Esophagus squamous epithelium (tissue), 5 donors: ENCODE measurements at regions of chr6 and their contacts with region 1.

Region 1: DNA sequence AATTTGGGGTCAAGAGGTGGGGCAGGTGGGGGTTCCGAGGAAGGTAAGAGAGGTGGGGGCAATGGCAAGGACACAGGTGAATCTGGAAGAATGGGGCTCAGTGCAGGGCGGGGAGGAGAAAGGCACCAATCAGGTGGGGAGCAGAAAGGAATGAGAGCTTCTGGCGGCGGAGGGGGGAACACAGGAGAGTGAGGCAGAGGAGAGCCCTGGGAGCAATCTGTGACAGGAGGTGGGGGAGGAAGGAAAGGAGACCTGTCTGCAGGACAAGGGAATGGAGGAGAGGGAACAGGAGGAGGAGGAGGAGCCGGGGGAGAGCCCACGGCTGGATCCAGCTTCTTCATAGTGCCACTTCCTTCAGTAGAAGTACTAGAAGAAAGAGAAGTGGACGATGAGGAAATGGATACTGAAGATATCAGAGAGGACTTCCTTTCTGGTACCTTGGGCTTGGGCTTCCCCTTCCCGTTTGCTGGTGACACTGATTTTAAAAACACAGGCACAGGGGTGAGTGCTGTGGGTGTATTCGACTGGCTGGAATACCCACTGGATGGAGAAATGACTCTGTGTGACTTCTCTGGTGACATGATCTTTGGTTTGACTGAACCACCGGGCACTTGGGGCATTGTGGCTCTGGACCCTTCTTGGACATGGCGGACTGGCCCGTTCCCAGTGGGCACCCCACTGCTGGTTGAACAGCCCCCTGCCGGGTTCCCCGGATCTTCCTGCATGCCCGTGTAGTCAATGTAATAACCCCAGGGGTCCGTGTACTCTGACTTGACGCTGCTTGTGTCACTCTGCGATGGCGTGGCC is 27.4 kb downstream of the HEBP2 start:
- DNase-seq: no peak
- H3K4me3 ChIP-seq: no peak overlapping the region
- H3K27ac ChIP-seq: no peak overlapping the region
- H3K4me1 ChIP-seq: peaks cover 0 to 3% (median 0%) of the 10 kb centered on the region in 3 donors
- H3K27me3 ChIP-seq: no peaks in the 10 kb centered on the region
- CTCF ChIP-seq: no peak
- POLR2A ChIP-seq: no peak

Region 2: GRCh38 chr6:138509371-138509770 is 77.9 kb after region 1 on chr6:
- intact Hi-C with region 1: loop called (anchors 5 kb)
- DNase-seq: no peak
- H3K4me3 ChIP-seq: no peak overlapping the region
- H3K27ac ChIP-seq: no peak overlapping the region
- H3K4me1 ChIP-seq: peaks cover 0 to 19% (median 0%) of the 10 kb centered on the region in 3 donors
- H3K27me3 ChIP-seq: no peaks in the 10 kb centered on the region
- CTCF ChIP-seq: peak; percentile 33 to 71 (median 44)
- POLR2A ChIP-seq: no peak

Region 3: DNA sequence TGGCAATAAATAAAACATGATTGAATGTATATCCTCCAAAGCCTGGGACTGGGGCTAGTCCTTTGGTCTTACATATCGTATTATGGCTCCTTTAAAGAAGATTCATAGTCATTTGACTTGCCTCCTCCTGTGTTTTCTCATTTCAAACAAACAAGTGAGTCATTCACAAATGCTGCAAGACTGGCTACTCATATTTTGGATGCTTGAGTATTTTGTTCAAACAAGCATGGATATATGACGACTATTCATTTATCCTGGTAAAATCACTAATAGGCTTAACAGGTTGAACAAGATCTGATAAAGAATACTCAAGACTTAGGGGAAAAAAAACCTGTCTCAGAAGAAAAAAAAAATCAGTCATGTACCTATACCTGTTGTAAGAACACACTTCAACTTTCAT is 231.0 kb after region 1 on chr6:
- intact Hi-C with region 1: no loop called
- DNase-seq: no peak
- H3K4me3 ChIP-seq: no peak overlapping the region
- H3K27ac ChIP-seq: peak overlapping the region in 3 of 4 donors; percentile 63 to 74 (median 73)
- H3K4me1 ChIP-seq: peaks cover 0 to 38% (median 0%) of the 10 kb centered on the region in 3 donors
- H3K27me3 ChIP-seq: no peaks in the 10 kb centered on the region
- CTCF ChIP-seq: no peak
- POLR2A ChIP-seq: no peak